A673 (cell line): ENCODE measurements at regions of chr1 and their contacts with region 1.

Region 1: GRCh38 chr1:7218210-7218832 is 433.1 kb downstream of the CAMTA1 start:
- DNase-seq: peak; percentile 67
- H3K4me3 ChIP-seq: no peak overlapping the region
- H3K27ac ChIP-seq: no peak overlapping the region
- H3K4me1 ChIP-seq: peaks cover 2% of the 10 kb centered on the region
- H3K27me3 ChIP-seq: no peaks in the 10 kb centered on the region
- CTCF ChIP-seq: peak; percentile 82

Region 2: DNA sequence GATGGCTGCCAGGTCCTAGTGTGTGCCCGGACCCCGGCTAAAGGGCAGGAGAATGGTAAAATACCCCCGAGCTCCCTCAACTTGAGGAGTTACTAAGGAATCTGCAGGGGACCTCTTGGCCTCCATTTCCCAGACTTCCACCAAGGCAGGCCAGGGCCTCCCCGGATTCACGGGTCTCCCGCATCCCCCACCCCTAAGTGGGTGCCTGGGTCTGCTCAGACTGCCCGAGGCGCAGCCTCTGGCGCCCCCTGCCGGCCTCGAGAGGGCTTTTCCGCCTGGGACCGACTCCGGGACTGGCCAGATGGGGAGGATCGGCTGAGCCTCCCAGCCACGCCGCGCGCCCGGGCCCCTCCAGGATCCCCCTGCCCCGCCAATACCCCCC is 728.5 kb before region 1 on chr1:
- CTCF ChIA-PET with region 1: no interaction called
- POLR2A ChIA-PET with region 1: no interaction called
- intact Hi-C with region 1: loop called (anchors 5 kb)
- DNase-seq: peak; percentile 80
- H3K4me3 ChIP-seq: peak overlapping the region; percentile 55
- H3K27ac ChIP-seq: no peak overlapping the region
- H3K4me1 ChIP-seq: peaks cover 14% of the 10 kb centered on the region
- H3K27me3 ChIP-seq: peaks cover 16% of the 10 kb centered on the region
- CTCF ChIP-seq: peak; percentile 95

Region 3: DNA sequence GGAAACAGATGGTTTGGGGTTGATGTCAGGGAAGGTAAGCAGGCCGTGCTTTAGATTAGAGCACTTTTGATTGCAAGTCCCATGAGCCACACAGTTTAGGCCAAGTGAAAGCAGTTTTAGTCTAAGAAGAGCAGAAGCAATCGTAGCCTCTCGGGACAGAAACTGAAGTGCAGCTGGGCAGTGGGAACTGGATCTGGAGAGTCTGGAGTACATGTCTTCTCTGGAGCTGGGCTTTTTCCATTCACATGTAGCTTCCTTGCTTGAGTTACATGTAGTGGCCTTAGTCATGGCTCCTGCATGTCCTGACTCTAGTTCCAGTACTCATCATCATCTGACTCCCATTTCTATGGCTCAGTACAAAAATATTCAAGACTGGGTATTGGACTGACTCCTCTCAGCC is 416.4 kb before region 1 on chr1:
- CTCF ChIA-PET with region 1: no interaction called
- POLR2A ChIA-PET with region 1: no interaction called
- intact Hi-C with region 1: loop called (anchors 5 kb)
- DNase-seq: no peak
- H3K4me3 ChIP-seq: no peak overlapping the region
- H3K27ac ChIP-seq: no peak overlapping the region
- H3K4me1 ChIP-seq: peaks cover 4% of the 10 kb centered on the region
- H3K27me3 ChIP-seq: no peaks in the 10 kb centered on the region
- CTCF ChIP-seq: no peak

Region 4: GRCh38 chr1:7638078-7638477 is 419.8 kb after region 1 on chr1:
- CTCF ChIA-PET with region 1: no interaction called
- POLR2A ChIA-PET with region 1: no interaction called
- intact Hi-C with region 1: no loop called
- DNase-seq: no peak
- H3K4me3 ChIP-seq: no peak overlapping the region
- H3K27ac ChIP-seq: no peak overlapping the region
- H3K4me1 ChIP-seq: no peaks in the 10 kb centered on the region
- H3K27me3 ChIP-seq: no peaks in the 10 kb centered on the region
- CTCF ChIP-seq: no peak